GM10248 (cell line): ENCODE measurements at regions of chrX and their contacts with region 1.

Region 1: DNA sequence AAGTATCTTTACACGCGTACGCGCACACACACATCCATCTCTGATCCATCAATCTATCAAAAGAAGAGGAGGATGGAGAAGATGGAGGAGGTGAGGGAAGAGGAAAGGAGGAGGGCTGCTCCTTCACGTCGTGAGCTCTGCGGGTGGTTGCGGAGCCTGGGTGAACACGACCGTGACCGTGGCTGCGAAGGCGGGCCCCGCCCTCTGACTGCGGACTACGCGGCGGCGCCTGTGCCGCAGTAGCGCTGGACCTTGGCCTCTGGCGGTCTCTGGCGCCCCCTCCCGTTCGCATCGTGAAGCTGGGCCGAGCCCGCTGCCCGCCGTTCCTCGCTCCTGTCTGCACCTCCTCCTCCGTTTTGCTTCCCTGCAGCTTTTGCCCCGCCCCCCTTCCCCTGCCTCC is 37.7 kb upstream of the ARAF start:
- DNase-seq: peak; percentile 86
- CTCF ChIP-seq: peak; percentile 82

Region 2: GRCh38 chrX:47190445-47191269 is 332.6 kb before region 1 on chrX:
- CTCF ChIA-PET with region 1: interaction called, 13 read pairs
- POLR2A ChIA-PET with region 1: no interaction called
- DNase-seq: peak; percentile 88
- CTCF ChIP-seq: no peak

Region 3: GRCh38 chrX:47539860-47540259 is 16.6 kb after region 1 on chrX:
- CTCF ChIA-PET with region 1: interaction called, 12 read pairs
- POLR2A ChIA-PET with region 1: no interaction called
- DNase-seq: no peak
- CTCF ChIP-seq: no peak